Mammary epithelial cell (primary cell): ENCODE measurements at regions of chr1 and their contacts with region 1.

Region 1: GRCh38 chr1:5745776-5746610 is 246.2 kb downstream of the NPHP4 start:
- DNase-seq: peak; percentile 47
- H3K4me3 ChIP-seq: no peak overlapping the region
- H3K27ac ChIP-seq: no peak overlapping the region
- H3K4me1 ChIP-seq: peaks cover 3% of the 10 kb centered on the region
- H3K27me3 ChIP-seq: no peaks in the 10 kb centered on the region
- CTCF ChIP-seq: peak; percentile 88 to 99

Region 2: DNA sequence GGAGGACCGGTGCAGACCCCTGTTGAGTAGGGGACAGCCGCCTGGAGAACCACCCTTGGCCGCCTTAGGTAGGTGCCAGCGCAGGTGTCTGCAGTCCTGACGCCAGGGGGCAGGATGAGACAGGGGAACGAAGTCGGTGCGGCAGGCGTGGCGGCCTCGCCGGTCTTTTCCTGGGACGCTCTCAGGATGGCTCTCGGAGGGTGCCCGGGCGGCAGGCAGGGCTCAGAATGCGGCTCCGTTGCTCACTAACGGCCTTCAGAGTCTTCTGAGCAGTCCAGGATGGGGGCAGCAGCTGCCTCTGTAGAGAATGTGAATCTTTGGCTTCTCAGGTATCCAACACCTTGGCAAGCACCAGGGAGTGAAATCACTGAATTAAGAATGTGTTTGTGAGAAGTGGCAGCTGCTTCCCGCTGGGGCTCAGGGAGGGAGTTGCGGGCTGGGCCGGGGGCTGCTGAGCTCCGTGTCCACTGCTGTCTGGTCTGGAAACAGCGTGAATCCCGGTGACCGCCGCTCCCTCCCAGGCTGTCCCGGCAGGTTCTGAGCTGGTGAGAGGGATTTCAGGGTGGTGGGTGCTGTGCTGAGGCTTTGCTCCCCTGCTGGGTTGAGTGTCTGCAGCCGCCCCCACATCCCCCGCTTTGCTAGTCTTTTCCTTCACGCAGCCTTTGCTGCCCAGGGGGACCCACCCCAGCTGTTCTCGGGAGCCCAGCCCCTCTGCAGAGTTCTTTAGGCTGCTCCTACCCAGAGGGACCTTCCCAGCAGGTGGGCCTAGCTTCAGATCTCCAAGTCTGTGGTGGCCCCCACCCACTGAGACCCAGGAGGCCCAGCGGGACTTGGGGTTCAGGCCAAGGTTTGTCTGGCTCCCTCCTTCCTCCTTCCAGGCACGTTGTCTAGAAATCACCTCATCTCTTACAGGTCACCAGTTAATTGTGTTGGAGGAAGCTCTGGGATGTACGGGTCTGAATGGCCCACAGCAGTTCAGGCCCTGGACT is 1834.8 kb before region 1 on chr1:
- CTCF ChIA-PET with region 1: no interaction called
- dilution Hi-C with region 1: no loop called
- in situ Hi-C with region 1: no loop called
- intact Hi-C with region 1: loop called (anchors 1 kb)
- DNase-seq: peak; percentile 52
- H3K4me3 ChIP-seq: peak overlapping the region in 1 of 3 experiments; percentile 19
- H3K27ac ChIP-seq: no peak overlapping the region
- H3K4me1 ChIP-seq: peaks cover 4% of the 10 kb centered on the region
- H3K27me3 ChIP-seq: no peaks in the 10 kb centered on the region
- CTCF ChIP-seq: peak; percentile 80 to 89

Region 3: DNA sequence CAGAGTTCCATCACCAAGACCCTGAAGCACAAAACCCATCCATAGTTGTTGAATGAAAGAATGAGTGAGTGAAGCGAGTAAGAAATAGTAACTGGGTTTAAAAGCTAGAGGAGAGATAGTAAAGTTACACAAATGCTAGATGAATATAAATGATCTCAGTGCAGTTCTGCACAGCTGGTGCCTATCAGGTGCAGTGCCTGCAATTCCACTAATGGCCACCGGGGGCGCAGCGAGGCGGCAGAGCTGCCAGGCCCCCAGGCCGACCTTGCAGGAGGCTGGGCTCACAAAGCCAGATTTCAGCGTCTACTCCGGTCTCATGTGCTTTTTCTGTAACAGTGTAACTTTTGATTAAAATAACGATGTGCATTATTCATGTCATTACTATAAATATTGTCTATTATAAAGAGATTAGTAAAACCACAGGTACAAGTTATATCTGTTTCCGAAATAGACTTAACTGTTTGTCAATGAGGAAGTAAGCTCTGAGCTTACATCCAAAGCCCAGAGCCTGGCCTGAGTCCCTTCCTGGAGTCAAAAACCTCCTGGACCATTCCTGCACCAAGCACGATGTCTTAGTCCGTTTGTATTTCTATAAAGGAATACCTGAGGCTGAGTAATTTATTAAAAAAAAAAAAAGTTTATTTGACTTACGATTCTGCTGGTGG is 231.3 kb before region 1 on chr1:
- CTCF ChIA-PET with region 1: interaction called, 3 read pairs
- dilution Hi-C with region 1: no loop called
- in situ Hi-C with region 1: no loop called
- intact Hi-C with region 1: loop called (anchors 1 kb)
- DNase-seq: peak; percentile 6
- H3K4me3 ChIP-seq: no peak overlapping the region
- H3K27ac ChIP-seq: no peak overlapping the region
- H3K4me1 ChIP-seq: no peaks in the 10 kb centered on the region
- H3K27me3 ChIP-seq: no peaks in the 10 kb centered on the region
- CTCF ChIP-seq: peak; percentile 97 to 98

Region 4: GRCh38 chr1:5637171-5637570 is 108.8 kb before region 1 on chr1:
- CTCF ChIA-PET with region 1: interaction called, 4 read pairs
- dilution Hi-C with region 1: no loop called
- in situ Hi-C with region 1: loop called (anchors 5 kb)
- intact Hi-C with region 1: loop called (anchors 1 kb)
- DNase-seq: no peak
- H3K4me3 ChIP-seq: no peak overlapping the region
- H3K27ac ChIP-seq: no peak overlapping the region
- H3K4me1 ChIP-seq: no peaks in the 10 kb centered on the region
- H3K27me3 ChIP-seq: no peaks in the 10 kb centered on the region
- CTCF ChIP-seq: peak; percentile 56 to 78

Region 5: DNA sequence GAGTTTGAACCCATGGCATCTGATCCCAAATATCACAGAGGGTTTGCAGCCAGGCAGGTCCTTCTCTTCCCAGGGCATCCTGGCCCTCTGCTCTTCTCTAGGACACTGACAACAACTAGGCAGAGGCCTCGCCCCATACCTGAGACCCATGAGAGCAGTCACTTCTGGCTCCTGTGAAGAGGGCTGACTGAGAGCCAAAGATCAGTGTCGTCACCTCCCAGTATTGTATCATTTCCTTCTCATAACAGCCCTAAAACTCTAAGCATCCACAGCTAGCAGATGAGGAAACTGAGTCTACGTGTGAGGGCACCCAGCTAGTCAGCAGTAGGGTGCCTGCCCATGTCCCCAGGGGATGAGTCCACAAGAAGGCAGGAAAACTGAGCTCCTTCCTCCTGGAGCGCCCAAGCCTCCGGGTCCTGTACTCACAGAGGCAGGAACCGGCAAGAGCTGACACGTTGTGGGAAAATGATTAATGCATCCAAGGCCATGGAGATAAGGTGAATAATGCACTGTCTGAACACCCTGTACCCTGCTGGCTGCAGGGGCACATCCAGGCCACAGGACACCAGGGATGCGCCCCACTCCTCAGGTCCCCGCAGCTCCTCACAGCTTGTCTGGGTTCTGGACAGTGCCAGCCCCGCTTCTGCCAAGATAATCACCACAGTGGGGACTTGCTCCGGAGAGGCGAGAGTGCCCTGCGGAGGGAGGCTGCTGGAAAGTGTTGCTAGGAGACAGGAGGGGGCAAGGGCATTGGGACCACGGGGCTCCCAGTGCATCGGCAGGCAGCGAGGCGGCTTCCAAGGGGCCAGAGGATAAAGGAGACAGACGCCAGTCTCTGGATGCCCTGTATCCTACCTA is 93.8 kb before region 1 on chr1:
- CTCF ChIA-PET with region 1: interaction called, 27 read pairs
- dilution Hi-C with region 1: no loop called
- in situ Hi-C with region 1: no loop called
- intact Hi-C with region 1: no loop called
- DNase-seq: peak; percentile 77
- H3K4me3 ChIP-seq: no peak overlapping the region
- H3K27ac ChIP-seq: no peak overlapping the region
- H3K4me1 ChIP-seq: peaks cover 18% of the 10 kb centered on the region
- H3K27me3 ChIP-seq: no peaks in the 10 kb centered on the region
- CTCF ChIP-seq: no peak

Region 6: GRCh38 chr1:5810553-5811270 is 64.7 kb after region 1 on chr1:
- CTCF ChIA-PET with region 1: no interaction called
- dilution Hi-C with region 1: no loop called
- in situ Hi-C with region 1: no loop called
- intact Hi-C with region 1: no loop called
- DNase-seq: no peak
- H3K4me3 ChIP-seq: no peak overlapping the region
- H3K27ac ChIP-seq: no peak overlapping the region
- H3K4me1 ChIP-seq: no peaks in the 10 kb centered on the region
- H3K27me3 ChIP-seq: no peaks in the 10 kb centered on the region
- CTCF ChIP-seq: no peak

Region 7: DNA sequence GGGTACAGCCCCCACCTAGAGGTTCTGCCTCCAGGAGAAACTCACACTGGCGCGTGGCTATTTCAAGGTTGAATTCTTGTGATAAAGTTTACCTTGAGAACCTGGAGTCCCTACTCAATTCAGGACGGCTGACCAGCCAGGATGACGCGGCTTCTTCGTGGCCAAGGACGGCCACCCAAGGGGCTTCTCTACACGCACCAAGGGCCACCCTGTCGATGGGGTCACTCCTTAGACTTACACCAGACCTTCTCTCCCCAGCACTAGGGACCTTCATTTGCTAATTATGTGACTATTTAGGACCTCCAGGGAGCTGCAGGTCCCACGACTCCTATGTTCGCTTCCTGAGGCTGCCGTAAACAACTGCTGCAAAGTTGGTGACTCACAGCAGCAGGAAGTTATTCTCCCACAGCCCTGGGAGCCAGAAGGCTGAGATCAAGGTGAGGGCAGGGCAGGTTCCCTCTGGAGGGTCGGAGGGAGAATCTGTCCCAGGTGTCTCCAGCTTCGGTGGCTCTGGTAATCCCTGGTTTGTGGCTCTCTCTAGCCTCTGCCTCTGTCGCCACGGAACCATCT is 110.3 kb after region 1 on chr1:
- CTCF ChIA-PET with region 1: no interaction called
- dilution Hi-C with region 1: no loop called
- in situ Hi-C with region 1: no loop called
- intact Hi-C with region 1: no loop called
- DNase-seq: no peak
- H3K4me3 ChIP-seq: no peak overlapping the region
- H3K27ac ChIP-seq: no peak overlapping the region
- H3K4me1 ChIP-seq: no peaks in the 10 kb centered on the region
- H3K27me3 ChIP-seq: no peaks in the 10 kb centered on the region
- CTCF ChIP-seq: no peak

Region 8: GRCh38 chr1:5915587-5916571 is 169.9 kb after region 1 on chr1:
- CTCF ChIA-PET with region 1: no interaction called
- dilution Hi-C with region 1: no loop called
- in situ Hi-C with region 1: no loop called
- intact Hi-C with region 1: loop called (anchors 1 kb)
- DNase-seq: peak; percentile 58
- H3K4me3 ChIP-seq: no peak overlapping the region
- H3K27ac ChIP-seq: no peak overlapping the region
- H3K4me1 ChIP-seq: peaks cover 8% of the 10 kb centered on the region
- H3K27me3 ChIP-seq: no peaks in the 10 kb centered on the region
- CTCF ChIP-seq: peak; percentile 73 to 77

Region 9: DNA sequence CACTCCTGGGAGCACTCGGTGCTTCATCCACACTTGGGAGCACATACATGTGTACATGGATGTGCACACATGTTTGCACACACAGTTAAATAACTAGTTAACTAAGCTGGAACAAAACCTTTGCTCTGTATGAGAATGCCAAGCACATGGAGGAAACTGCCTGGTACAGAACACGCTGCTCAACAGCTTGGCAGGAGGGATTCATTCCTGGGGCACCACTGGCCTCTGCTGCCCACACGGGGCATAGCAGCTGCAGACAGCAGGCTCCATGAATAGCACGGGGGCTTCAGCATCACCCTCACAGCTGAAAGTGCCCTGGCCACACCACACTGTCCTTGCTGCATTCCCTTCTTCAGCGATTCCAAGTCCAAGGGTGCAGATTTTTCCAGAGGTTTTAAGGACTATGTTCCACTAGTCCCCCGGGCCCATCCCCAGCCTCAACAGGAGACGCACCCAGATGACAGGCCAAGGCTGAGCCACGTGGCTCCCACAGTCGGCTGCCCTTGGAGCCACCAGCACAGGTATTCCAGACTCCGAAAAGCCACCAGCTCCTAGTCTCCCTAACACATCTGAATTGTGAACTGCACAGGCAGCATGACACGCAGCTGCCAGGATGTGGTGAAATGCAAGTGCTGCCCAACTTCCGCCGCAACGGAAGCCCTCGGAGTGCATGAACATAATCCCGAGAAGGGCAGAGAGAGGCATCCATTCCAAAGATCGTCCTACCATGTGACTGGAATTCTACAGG is 229.3 kb after region 1 on chr1:
- CTCF ChIA-PET with region 1: no interaction called
- dilution Hi-C with region 1: no loop called
- in situ Hi-C with region 1: no loop called
- intact Hi-C with region 1: loop called (anchors 5 kb)
- DNase-seq: peak; percentile 16
- H3K4me3 ChIP-seq: no peak overlapping the region
- H3K27ac ChIP-seq: no peak overlapping the region
- H3K4me1 ChIP-seq: no peaks in the 10 kb centered on the region
- H3K27me3 ChIP-seq: no peaks in the 10 kb centered on the region
- CTCF ChIP-seq: peak; percentile 77 to 83